A673 (cell line): ENCODE measurements at regions of chr14 and their contacts with region 1.

Region 1: GRCh38 chr14:102655170-102655569 is 62.7 kb downstream of the RCOR1 start:
- DNase-seq: peak; percentile 62
- H3K4me3 ChIP-seq: no peak overlapping the region
- H3K27ac ChIP-seq: no peak overlapping the region
- H3K4me1 ChIP-seq: peaks cover 45% of the 10 kb centered on the region
- H3K27me3 ChIP-seq: no peaks in the 10 kb centered on the region
- CTCF ChIP-seq: no peak

Region 2: GRCh38 chr14:102509744-102510615 is 145.2 kb before region 1 on chr14 and contains the start of gene ANKRD9:
- CTCF ChIA-PET with region 1: no interaction called
- POLR2A ChIA-PET with region 1: interaction called, 11 read pairs
- intact Hi-C with region 1: no loop called
- DNase-seq: peak; percentile 97
- H3K4me3 ChIP-seq: peak within 1 kb of the TSS; percentile 74
- H3K27ac ChIP-seq: peak within 1 kb of the TSS; percentile 85
- H3K4me1 ChIP-seq: peaks cover 15% of the 10 kb centered on the region
- H3K27me3 ChIP-seq: no peaks in the 10 kb centered on the region
- CTCF ChIP-seq: no peak
- total RNA-seq, gene ANKRD9: 28.0 and 35.9 TPM in 2 replicates